GM12878 (cell line): ENCODE measurements at regions of chr4 and their contacts with region 1.

Region 1: DNA sequence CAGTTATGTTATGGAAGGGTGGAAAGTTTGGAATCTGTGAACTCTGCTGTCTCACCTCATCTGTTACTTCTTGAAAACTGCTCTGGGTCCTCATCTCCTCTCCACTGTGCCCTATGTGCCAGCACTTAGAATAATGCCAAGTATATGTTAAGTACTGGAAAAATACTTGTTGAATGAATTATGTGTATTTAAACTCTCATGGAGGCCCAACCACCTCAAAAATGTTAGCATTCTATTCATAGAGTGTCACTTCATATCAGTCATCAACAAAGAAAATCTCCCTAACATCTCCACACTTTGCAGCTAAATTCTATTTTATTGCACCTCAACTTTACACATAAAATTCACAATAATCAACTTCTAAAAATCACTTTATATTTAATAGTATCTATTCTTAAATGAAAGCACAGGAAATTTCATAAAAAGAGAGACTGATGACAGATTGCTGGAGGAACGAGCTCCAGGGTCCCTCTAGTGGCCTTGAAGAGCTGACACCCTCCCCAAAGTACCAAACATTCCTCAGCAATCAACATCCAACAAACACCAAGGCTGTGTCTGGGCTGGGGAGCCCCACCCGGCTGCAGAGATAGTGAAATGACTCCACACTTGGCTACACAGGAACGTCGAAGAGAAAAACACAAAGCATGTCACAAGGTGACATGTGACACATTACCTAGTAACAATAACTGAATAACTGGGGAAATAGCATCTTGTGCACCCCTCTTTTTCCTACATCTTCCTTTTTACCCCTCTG is 45.8 kb downstream of the SLC39A8 start:
- DNase-seq: no peak
- ATAC-seq: peak; percentile 98
- H3K4me3 ChIP-seq: no peak overlapping the region
- H3K27ac ChIP-seq: no peak overlapping the region
- H3K4me1 ChIP-seq: no peaks in the 10 kb centered on the region
- H3K27me3 ChIP-seq: no peaks in the 10 kb centered on the region
- CTCF ChIP-seq: peak; percentile 74 to 77 (median 75)
- EP300 ChIP-seq: no peak
- POLR2A ChIP-seq: no peak
- RAD21 ChIP-seq: peak; percentile 74

Region 2: DNA sequence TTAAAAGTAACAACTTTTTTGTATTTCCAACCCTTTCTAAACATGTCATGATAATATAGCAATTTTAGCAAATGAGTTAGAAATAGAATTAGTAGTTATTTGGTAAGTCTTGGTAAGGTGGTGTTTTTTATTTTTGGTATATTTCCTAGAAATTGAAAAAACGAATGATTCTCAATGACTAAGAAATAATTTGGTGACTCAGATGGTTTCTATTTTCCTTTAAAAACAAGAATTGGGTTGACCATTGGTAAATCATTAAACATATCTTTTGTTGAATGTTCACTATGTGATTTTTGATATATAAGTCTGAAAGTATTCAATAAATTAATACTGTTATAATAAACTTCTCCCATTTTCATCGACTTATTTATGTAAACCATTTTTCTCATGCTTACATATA is 715.2 kb before region 1 on chr4:
- CTCF ChIA-PET with region 1: no interaction called
- POLR2A ChIA-PET with region 1: no interaction called
- RAD21 ChIA-PET with region 1: no interaction called
- SMC1A ChIA-PET with region 1: no interaction called
- in situ Hi-C with region 1: no loop called
- intact Hi-C with region 1: no loop called
- DNase-seq: no peak
- ATAC-seq: no peak
- H3K4me3 ChIP-seq: no peak overlapping the region
- H3K27ac ChIP-seq: no peak overlapping the region
- H3K4me1 ChIP-seq: no peaks in the 10 kb centered on the region
- H3K27me3 ChIP-seq: no peaks in the 10 kb centered on the region
- CTCF ChIP-seq: no peak
- EP300 ChIP-seq: no peak
- POLR2A ChIP-seq: no peak
- RAD21 ChIP-seq: no peak

Region 3: GRCh38 chr4:102263011-102263787 is 36.3 kb before region 1 on chr4:
- CTCF ChIA-PET with region 1: interaction called, 13 read pairs
- POLR2A ChIA-PET with region 1: no interaction called
- RAD21 ChIA-PET with region 1: interaction called, 5 read pairs
- SMC1A ChIA-PET with region 1: interaction called, 4 read pairs
- in situ Hi-C with region 1: no loop called
- intact Hi-C with region 1: no loop called
- DNase-seq: no peak
- ATAC-seq: peak; percentile 94
- H3K4me3 ChIP-seq: no peak overlapping the region
- H3K27ac ChIP-seq: no peak overlapping the region
- H3K4me1 ChIP-seq: no peaks in the 10 kb centered on the region
- H3K27me3 ChIP-seq: no peaks in the 10 kb centered on the region
- CTCF ChIP-seq: peak; percentile 32 to 55 (median 40); a peak in 5 of 6 replicates
- EP300 ChIP-seq: no peak
- POLR2A ChIP-seq: no peak
- RAD21 ChIP-seq: peak; percentile 61

Region 4: GRCh38 chr4:102311912-102312311 is 12.4 kb after region 1 on chr4:
- CTCF ChIA-PET with region 1: interaction called, 21 read pairs
- POLR2A ChIA-PET with region 1: interaction called, 3 read pairs
- RAD21 ChIA-PET with region 1: interaction called, 9 read pairs
- SMC1A ChIA-PET with region 1: interaction called, 12 read pairs
- in situ Hi-C with region 1: no loop called
- intact Hi-C with region 1: no loop called
- DNase-seq: no peak
- ATAC-seq: no peak
- H3K4me3 ChIP-seq: no peak overlapping the region
- H3K27ac ChIP-seq: no peak overlapping the region
- H3K4me1 ChIP-seq: no peaks in the 10 kb centered on the region
- H3K27me3 ChIP-seq: no peaks in the 10 kb centered on the region
- CTCF ChIP-seq: no peak
- EP300 ChIP-seq: no peak
- POLR2A ChIP-seq: no peak
- RAD21 ChIP-seq: no peak

Region 5: GRCh38 chr4:102321260-102321995 is 21.9 kb after region 1 on chr4:
- CTCF ChIA-PET with region 1: interaction called, 21 read pairs
- POLR2A ChIA-PET with region 1: interaction called, 12 read pairs
- RAD21 ChIA-PET with region 1: interaction called, 9 read pairs
- SMC1A ChIA-PET with region 1: interaction called, 7 read pairs
- in situ Hi-C with region 1: no loop called
- intact Hi-C with region 1: no loop called
- DNase-seq: peak; percentile 63
- ATAC-seq: peak; percentile 87
- H3K4me3 ChIP-seq: peak overlapping the region; percentile 23; the same call in 1 of the 2 replicates
- H3K27ac ChIP-seq: peak overlapping the region; percentile 62
- H3K4me1 ChIP-seq: peaks cover 6% of the 10 kb centered on the region
- H3K27me3 ChIP-seq: no peaks in the 10 kb centered on the region
- CTCF ChIP-seq: no peak
- EP300 ChIP-seq: peak in 1 of 2 experiments; percentile 52; a peak in 1 of 4 replicates
- POLR2A ChIP-seq: no peak
- RAD21 ChIP-seq: no peak

Region 6: GRCh38 chr4:102430461-102430910 is 131.0 kb after region 1 on chr4:
- CTCF ChIA-PET with region 1: interaction called, 9 read pairs
- POLR2A ChIA-PET with region 1: interaction called, 4 read pairs
- RAD21 ChIA-PET with region 1: interaction called, 11 read pairs
- SMC1A ChIA-PET with region 1: interaction called, 7 read pairs
- in situ Hi-C with region 1: no loop called
- intact Hi-C with region 1: no loop called
- DNase-seq: no peak
- ATAC-seq: peak; percentile 38
- H3K4me3 ChIP-seq: peak overlapping the region; percentile 83
- H3K27ac ChIP-seq: peak overlapping the region; percentile 61
- H3K4me1 ChIP-seq: no peaks in the 10 kb centered on the region
- H3K27me3 ChIP-seq: no peaks in the 10 kb centered on the region
- CTCF ChIP-seq: no peak
- EP300 ChIP-seq: no peak
- POLR2A ChIP-seq: no peak
- RAD21 ChIP-seq: no peak